Dendritic cell treated with granulocyte-macrophage colony-stimulating factor and Interleukin-4, amounts not matched to agents 40 ng/mL and 50 ng/mL, for 4 days (primary cell): ENCODE measurements at regions of chr11 and their contacts with region 1.

Region 1: DNA sequence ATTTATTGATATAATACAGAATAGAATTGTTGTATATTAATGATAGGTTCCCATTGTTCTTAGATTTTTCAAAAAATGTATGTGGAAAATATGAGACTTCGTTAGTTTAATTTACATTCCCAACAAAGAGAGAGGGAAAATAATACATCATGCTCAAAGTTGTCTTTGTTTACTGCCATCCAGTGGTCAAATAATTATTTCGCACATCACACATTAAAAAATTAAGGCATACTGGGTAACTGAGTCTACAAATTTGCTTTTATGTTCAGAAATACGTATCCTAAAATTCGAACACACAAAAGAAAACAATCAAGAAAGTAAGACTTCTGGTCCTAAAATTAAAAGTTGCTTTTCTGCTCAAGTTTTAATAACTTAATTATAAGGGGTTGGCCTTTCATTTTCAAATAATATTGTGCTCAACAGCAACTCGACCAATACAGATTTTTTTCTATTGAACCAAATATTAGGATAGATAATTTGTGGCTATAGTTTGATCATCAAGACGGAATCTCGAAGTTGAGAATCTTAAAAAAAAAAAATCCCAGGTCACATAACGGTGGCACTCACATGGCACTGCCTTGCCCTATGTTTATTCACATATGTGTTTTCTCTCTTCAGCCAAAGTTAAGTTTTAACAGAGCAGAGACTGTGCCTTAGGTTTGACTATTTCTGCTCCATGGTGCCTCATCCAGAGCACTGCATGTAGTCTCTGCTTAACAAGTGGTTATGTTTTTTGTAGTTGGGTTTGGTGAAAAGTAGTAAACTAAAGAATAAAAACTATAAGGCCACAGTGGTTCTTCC is 12.3 kb downstream of the PDGFD start:
- H3K4me3 Mint-ChIP-seq: no peak overlapping the region
- H3K27ac Mint-ChIP-seq: no peak overlapping the region
- H3K4me1 Mint-ChIP-seq: no peaks in the 10 kb centered on the region
- H3K27me3 Mint-ChIP-seq: no peaks in the 10 kb centered on the region

Region 2: DNA sequence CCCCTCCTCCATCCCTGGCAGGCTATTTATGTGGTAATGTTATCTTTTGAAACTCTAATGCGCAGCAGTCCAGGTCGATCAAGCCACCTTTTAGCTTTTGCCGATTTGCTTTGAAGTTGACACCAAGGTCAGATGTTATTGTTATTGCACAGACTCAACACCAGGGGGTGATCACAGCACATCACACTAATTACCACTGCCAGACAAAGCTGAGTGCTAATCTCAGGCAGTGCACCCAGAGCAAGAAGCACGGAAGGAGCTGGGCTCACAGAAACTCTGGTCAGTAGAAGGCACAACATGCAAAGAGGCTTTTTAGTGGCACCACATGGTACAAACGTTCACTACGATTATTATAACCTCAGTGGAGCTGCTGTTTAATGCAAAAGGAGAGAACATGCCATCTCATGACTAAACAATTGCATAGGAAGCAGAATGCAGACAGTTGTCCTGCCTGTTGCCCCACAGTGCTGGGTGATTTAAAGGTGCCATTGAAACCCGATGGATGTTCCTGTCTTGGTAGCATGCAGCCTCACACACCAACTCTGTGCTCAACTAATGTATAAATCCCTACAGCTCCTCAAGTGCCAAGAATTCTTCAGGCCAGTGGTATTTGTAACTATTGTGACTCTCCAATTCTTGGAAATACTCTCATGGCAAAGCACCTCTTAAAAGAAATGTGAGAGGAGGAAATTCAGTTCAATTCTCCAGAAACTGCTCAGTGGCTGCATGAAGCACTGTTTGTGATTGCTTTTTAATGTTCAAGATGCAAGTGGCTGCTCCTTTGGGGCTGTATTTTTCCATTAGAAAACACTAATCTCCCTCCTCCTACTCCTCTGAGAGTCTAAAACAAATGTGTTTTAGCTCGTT is 469.1 kb before region 1 on chr11:
- intact Hi-C with region 1: loop called (anchors 1 kb)
- H3K4me3 Mint-ChIP-seq: no peak overlapping the region
- H3K27ac Mint-ChIP-seq: no peak overlapping the region
- H3K4me1 Mint-ChIP-seq: peaks cover 7% of the 10 kb centered on the region
- H3K27me3 Mint-ChIP-seq: no peaks in the 10 kb centered on the region

Region 3: GRCh38 chr11:103927535-103927934 is 224.1 kb before region 1 on chr11:
- intact Hi-C with region 1: loop called (anchors 2 kb)
- H3K4me3 Mint-ChIP-seq: no peak overlapping the region
- H3K27ac Mint-ChIP-seq: no peak overlapping the region
- H3K4me1 Mint-ChIP-seq: no peaks in the 10 kb centered on the region
- H3K27me3 Mint-ChIP-seq: no peaks in the 10 kb centered on the region